ENCODE measurements at regions of chr9 and their contacts with region 1.

Region 1: GRCh38 chr9:36204906-36205547 is 14.3 kb downstream of the CLTA start:
- DNase-seq: no peak
- H3K4me3 Mint-ChIP-seq: no peak overlapping the region
- H3K27ac Mint-ChIP-seq: no peak overlapping the region
- H3K4me1 Mint-ChIP-seq: peaks cover 56% of the 10 kb centered on the region
- H3K27me3 Mint-ChIP-seq: no peaks in the 10 kb centered on the region

Region 2: DNA sequence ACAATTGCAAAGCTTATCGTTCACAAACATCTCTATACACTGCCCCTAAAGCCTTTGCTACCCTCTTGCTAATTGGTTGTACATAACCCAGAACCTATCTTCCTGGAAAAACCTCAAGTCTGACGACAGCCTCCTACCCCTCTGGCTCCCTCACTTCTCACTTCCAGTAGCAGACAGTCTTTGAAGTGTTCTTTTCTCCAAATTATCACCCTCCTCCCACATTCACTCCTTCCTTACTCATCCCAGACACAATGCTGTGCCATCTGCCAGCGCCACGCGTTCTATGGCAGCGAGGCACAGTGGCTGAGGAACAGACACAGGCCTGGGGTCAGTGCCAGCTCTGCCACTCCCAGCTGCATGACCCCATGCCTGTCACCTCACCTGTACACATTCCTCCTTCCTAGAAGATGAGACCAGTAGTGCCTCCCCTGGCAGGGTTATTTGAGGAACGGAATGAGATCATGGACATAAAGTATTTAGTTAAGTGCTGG is 13.4 kb after region 1 on chr9:
- intact Hi-C with region 1: loop called (anchors 1 kb)
- DNase-seq: peak; percentile 17
- H3K4me3 Mint-ChIP-seq: peak overlapping the region; percentile 71
- H3K27ac Mint-ChIP-seq: peak overlapping the region; percentile 90
- H3K4me1 Mint-ChIP-seq: peaks cover 37% of the 10 kb centered on the region
- H3K27me3 Mint-ChIP-seq: no peaks in the 10 kb centered on the region

Region 3: GRCh38 chr9:36237230-36237629 is 32.2 kb after region 1 on chr9:
- intact Hi-C with region 1: loop called (anchors 2 kb)
- DNase-seq: no peak
- H3K4me3 Mint-ChIP-seq: no peak overlapping the region
- H3K27ac Mint-ChIP-seq: no peak overlapping the region
- H3K4me1 Mint-ChIP-seq: peaks cover 8% of the 10 kb centered on the region
- H3K27me3 Mint-ChIP-seq: no peaks in the 10 kb centered on the region